ENCODE measurements at regions of chr20 and their contacts with region 1.

Region 1: DNA sequence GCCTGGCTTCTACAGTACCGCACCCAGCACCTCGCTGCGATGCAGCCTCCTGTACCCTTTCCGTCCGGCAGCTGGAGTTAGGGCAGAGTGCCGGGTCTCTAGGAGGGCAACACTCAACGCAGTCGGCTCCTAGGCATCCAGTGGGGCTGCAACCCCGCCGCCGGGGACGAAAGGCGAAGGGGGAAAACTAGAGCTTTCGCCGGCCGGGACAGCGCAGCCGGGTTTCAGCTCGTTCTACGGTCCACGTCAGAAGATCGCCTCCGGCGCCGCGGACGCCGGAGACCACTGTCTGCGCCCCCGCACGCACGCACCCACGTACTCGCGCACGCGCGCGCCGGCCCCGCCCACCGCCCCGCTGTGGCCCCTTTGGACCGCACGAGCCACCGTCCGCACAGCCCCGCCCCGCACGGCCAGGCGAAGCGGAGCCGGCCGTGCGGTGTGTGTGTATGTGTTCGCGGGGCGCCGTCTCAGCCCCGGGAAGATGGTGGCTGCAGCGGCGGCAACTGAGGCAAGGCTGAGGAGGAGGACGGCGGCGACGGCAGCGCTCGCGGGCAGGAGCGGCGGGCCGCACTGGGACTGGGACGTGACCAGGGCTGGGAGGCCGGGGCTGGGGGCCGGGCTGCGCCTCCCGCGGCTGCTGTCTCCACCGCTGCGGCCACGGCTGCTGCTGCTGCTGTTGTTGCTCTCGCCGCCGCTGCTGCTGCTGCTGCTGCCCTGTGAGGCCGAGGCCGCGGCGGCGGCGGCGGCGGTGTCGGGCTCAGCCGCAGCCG is at the start of gene ATRN:
- DNase-seq: peak; percentile 94
- ATAC-seq: peak; percentile 88
- H3K4me3 Mint-ChIP-seq: peak within 1 kb of the TSS; percentile 84
- H3K27ac Mint-ChIP-seq: peak within 1 kb of the TSS; percentile 66
- H3K4me1 Mint-ChIP-seq: peaks cover 26% of the 10 kb centered on the region
- H3K27me3 Mint-ChIP-seq: no peaks in the 10 kb centered on the region
- total RNA-seq, gene ATRN: 6.8 to 7.6 TPM

Region 2: DNA sequence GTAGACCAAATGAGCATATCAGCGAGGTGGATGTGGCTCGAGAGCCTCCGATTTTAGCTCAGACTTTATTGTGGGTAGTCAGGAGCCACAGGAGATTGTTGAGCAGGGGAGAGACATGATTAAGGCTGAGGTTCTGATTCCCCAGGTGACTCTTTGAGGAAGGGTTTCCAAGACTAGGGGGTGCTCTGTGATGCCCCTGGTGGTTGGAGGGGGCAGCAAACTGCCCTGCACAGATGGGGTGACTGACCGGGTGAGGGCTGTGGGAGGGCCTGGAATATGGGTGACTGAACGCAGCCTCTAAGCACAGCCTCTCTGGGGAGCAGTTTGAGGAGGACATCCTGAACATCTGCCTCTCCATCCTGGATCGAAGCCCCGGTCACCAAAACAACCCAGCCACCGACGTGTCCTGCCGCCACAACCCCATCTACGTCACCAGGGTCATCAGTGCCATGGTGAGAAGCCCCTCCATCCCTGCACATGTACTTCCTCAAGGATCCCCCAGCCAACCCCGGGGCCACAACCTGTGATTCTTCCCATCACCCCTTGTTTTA is 1073.1 kb before region 1 on chr20:
- CTCF ChIA-PET with region 1: no interaction called
- POLR2A ChIA-PET with region 1: no interaction called
- intact Hi-C with region 1: loop called in 1 of 2 experiments (anchors 5 kb)
- DNase-seq: no peak
- ATAC-seq: no peak
- H3K4me3 Mint-ChIP-seq: no peak overlapping the region
- H3K27ac Mint-ChIP-seq: no peak overlapping the region
- H3K4me1 Mint-ChIP-seq: no peaks in the 10 kb centered on the region
- H3K27me3 Mint-ChIP-seq: no peaks in the 10 kb centered on the region

Region 3: GRCh38 chr20:3045816-3046676 is 424.8 kb before region 1 on chr20 and contains the start of gene MRPS26:
- CTCF ChIA-PET with region 1: no interaction called
- POLR2A ChIA-PET with region 1: no interaction called
- intact Hi-C with region 1: loop called in 1 of 2 experiments (anchors 5 kb)
- DNase-seq: peak; percentile 92
- ATAC-seq: peak; percentile 94
- H3K4me3 Mint-ChIP-seq: peak within 1 kb of the TSS; percentile 89
- H3K27ac Mint-ChIP-seq: peak within 1 kb of the TSS; percentile 88
- H3K4me1 Mint-ChIP-seq: peaks cover 27% of the 10 kb centered on the region
- H3K27me3 Mint-ChIP-seq: no peaks in the 10 kb centered on the region
- total RNA-seq, gene MRPS26: 107 to 153 TPM

Region 4: DNA sequence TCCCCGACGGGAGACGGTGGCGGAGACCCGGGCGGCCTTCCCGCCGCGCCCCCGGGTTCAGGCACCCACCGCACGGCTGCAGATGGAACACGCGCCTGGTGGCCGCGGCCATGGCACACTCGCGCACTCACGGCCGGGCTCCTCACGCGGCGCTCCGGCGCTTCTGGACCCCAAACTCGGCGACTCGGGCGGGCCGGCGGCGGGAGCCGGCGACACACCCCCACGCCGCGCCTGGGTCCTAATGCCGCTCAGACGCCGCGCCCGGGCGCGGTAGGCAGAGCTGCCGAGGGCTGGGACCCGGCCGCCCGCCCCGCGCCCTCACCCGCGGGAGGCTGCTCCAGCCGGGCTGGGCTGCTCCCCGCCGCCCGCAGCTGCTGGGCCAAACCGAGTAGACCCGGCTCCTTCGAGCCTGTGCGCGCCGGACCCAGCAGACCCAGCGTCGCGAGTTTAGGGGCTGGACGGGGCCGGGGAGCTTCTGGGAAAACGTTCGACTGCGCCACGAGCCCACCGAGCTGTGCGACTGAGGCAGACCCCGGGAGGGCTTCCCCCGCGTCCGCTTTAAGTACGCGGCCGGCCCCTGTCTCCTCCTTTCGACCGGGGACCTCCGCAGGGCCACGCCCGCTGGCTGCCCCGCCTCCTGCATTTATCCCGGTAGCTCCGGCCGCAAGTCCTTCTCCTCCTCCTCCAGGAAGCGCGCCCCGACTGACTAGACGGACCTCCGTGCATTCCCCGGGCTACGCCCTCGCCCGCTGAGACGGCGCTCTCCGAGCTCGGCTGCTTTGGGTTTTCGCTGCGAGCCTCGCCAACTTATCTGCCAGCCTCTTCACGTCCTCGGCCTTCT is 231.6 kb before region 1 on chr20 and contains the start of gene SLC4A11:
- CTCF ChIA-PET with region 1: no interaction called
- POLR2A ChIA-PET with region 1: no interaction called
- intact Hi-C with region 1: loop called in 1 of 2 experiments (anchors 2 kb)
- DNase-seq: peak; percentile 63
- ATAC-seq: peak; percentile 68
- H3K4me3 Mint-ChIP-seq: peak within 1 kb of the TSS; percentile 77
- H3K27ac Mint-ChIP-seq: no peak within 1 kb of the TSS
- H3K4me1 Mint-ChIP-seq: peaks cover 7% of the 10 kb centered on the region
- H3K27me3 Mint-ChIP-seq: peaks cover 48% of the 10 kb centered on the region
- total RNA-seq, gene SLC4A11: 0.60 to 0.66 TPM

Region 5: DNA sequence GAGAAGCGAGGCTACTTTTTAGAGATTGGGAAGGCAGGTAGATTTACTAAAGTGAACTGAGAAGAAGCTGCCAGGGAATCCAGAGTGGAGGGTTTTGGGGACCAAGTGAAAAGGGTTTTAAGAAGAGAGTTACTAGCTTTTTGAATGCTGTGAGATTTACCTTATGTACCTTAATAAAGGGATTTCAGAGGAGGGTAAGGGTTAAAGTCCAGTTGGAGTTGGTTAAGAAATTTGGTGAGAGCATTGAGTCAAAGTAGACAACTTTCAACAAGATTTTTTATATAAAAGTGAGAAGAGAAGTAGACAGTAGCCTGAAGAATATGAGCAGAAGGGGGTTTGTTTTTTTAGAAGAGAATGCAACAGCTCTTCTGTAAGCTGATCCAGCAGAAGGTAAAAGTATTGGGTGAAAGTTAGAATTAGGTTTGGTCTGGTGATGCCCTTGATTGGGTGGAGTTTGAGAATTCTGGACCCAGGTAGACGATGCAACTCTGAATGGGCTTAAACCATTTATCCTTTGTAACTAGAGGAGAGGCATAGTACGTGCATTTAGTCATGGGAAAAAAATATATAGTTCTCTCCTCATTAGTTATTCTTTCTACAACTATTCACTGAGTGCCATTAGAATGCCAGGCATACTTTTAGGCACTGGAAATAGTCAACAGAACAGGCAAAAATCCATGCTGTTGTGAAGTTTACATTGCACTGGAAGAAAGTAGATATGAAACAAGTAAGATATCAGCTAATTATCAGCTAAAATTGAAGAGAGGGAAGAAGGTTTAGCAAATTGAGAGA is 44.8 kb after region 1 on chr20:
- CTCF ChIA-PET with region 1: no interaction called
- POLR2A ChIA-PET with region 1: no interaction called
- intact Hi-C with region 1: no loop called
- DNase-seq: no peak
- ATAC-seq: no peak
- H3K4me3 Mint-ChIP-seq: no peak overlapping the region
- H3K27ac Mint-ChIP-seq: no peak overlapping the region
- H3K4me1 Mint-ChIP-seq: no peaks in the 10 kb centered on the region
- H3K27me3 Mint-ChIP-seq: no peaks in the 10 kb centered on the region

Region 6: GRCh38 chr20:3811467-3812258 is 340.9 kb after region 1 on chr20:
- CTCF ChIA-PET with region 1: no interaction called
- POLR2A ChIA-PET with region 1: no interaction called
- intact Hi-C with region 1: loop called in 1 of 2 experiments (anchors 10 kb)
- DNase-seq: peak; percentile 97
- ATAC-seq: peak; percentile 92
- H3K4me3 Mint-ChIP-seq: peak overlapping the region; percentile 78
- H3K27ac Mint-ChIP-seq: peak overlapping the region; percentile 96
- H3K4me1 Mint-ChIP-seq: peaks cover 78% of the 10 kb centered on the region
- H3K27me3 Mint-ChIP-seq: no peaks in the 10 kb centered on the region